GM12878 (cell line): ENCODE measurements at regions of chr7 and their contacts with region 1.

Region 1: GRCh38 chr7:38215735-38216670 is 38.0 kb downstream of the STARD3NL start:
- DNase-seq: peak; percentile 36
- ATAC-seq: peak; percentile 99
- H3K4me3 ChIP-seq: no peak overlapping the region
- H3K27ac ChIP-seq: peak overlapping the region; percentile 14; the same call in 1 of the 2 replicates
- H3K4me1 ChIP-seq: no peaks in the 10 kb centered on the region
- H3K27me3 ChIP-seq: no peaks in the 10 kb centered on the region
- CTCF ChIP-seq: peak; percentile 94 to 99 (median 98)
- EP300 ChIP-seq: no peak
- POLR2A ChIP-seq: no peak
- RAD21 ChIP-seq: peak; percentile 84

Region 2: GRCh38 chr7:37901236-37901827 is 314.7 kb before region 1 on chr7:
- CTCF ChIA-PET with region 1: interaction called, 38 read pairs
- POLR2A ChIA-PET with region 1: no interaction called
- RAD21 ChIA-PET with region 1: interaction called, 10 read pairs
- SMC1A ChIA-PET with region 1: interaction called, 31 read pairs
- in situ Hi-C with region 1: loop called (anchors 5 kb)
- intact Hi-C with region 1: loop called (anchors 5 kb)
- DNase-seq: no peak
- ATAC-seq: peak; percentile 78
- H3K4me3 ChIP-seq: no peak overlapping the region
- H3K27ac ChIP-seq: no peak overlapping the region
- H3K4me1 ChIP-seq: no peaks in the 10 kb centered on the region
- H3K27me3 ChIP-seq: peaks cover 0 to 2% of the 10 kb centered on the region in 2 experiments; a peak in 1 of 4 replicates
- CTCF ChIP-seq: peak; percentile 47 to 59 (median 50); a peak in 5 of 6 replicates
- EP300 ChIP-seq: no peak
- POLR2A ChIP-seq: no peak
- RAD21 ChIP-seq: peak; percentile 64

Region 3: GRCh38 chr7:38169847-38170246 is 46.2 kb before region 1 on chr7:
- CTCF ChIA-PET with region 1: interaction called, 14 read pairs
- POLR2A ChIA-PET with region 1: interaction called, 3 read pairs
- RAD21 ChIA-PET with region 1: interaction called, 12 read pairs
- SMC1A ChIA-PET with region 1: interaction called, 29 read pairs
- in situ Hi-C with region 1: no loop called
- intact Hi-C with region 1: loop called (anchors 5 kb)
- DNase-seq: peak; percentile 85
- ATAC-seq: peak; percentile 82
- H3K4me3 ChIP-seq: 0 out of 2 replicates have a peak overlapping the region, but pooled peaks have one; percentile 6
- H3K27ac ChIP-seq: peak overlapping the region; percentile 57
- H3K4me1 ChIP-seq: peaks cover 34% of the 10 kb centered on the region
- H3K27me3 ChIP-seq: no peaks in the 10 kb centered on the region
- CTCF ChIP-seq: no peak
- EP300 ChIP-seq: peak; percentile 38 to 83; a peak in 3 of 4 replicates
- POLR2A ChIP-seq: no peak
- RAD21 ChIP-seq: no peak

Region 4: DNA sequence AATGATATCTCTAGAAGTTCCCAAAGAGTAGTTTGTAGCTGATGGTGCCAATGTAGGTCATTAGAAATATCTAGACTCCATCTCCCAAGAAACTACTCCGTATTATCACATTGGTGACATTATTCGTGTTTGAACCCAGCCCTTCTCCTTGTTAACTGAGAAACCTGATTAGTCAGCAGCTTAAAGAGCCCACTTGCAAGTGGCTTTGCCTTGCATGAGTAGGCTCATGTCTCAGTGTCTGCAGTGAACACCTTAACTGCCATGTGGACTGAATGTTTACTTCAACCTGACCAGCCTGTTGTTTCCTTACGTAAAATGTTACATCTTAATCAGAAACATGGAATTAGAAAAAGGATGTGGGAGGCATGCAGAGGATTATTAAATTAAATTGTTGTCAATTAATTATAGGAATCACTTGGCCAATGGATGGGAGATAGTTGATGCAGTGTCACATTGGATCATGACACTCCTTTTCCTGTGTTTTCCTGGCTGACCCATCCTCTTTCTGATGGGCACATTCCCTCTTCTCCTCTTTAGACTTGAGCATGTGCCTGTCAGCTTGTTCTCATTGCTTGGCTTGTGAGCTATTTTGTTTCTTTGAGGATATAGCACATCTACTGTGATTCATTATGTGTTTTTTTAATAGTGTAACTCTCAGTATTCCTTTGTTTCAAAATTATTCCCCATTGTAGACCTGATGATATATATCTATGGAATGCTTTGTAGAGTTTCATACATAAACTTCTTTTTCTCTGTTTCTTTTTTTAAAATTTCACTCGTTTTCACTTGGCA is 20.0 kb before region 1 on chr7:
- CTCF ChIA-PET with region 1: interaction called, 114 read pairs
- POLR2A ChIA-PET with region 1: interaction called, 3 read pairs
- RAD21 ChIA-PET with region 1: interaction called, 12 read pairs
- SMC1A ChIA-PET with region 1: interaction called, 32 read pairs
- in situ Hi-C with region 1: no loop called
- intact Hi-C with region 1: no loop called
- DNase-seq: no peak
- ATAC-seq: peak; percentile 40; the same call in 1 of the 3 replicates
- H3K4me3 ChIP-seq: no peak overlapping the region
- H3K27ac ChIP-seq: no peak overlapping the region
- H3K4me1 ChIP-seq: no peaks in the 10 kb centered on the region
- H3K27me3 ChIP-seq: no peaks in the 10 kb centered on the region
- CTCF ChIP-seq: no peak
- EP300 ChIP-seq: no peak
- POLR2A ChIP-seq: no peak
- RAD21 ChIP-seq: no peak

Region 5: GRCh38 chr7:38318803-38319416 is 102.9 kb after region 1 on chr7:
- CTCF ChIA-PET with region 1: interaction called, 430 read pairs
- POLR2A ChIA-PET with region 1: interaction called, 3 read pairs
- RAD21 ChIA-PET with region 1: interaction called, 229 read pairs
- SMC1A ChIA-PET with region 1: interaction called, 289 read pairs
- in situ Hi-C with region 1: no loop called
- intact Hi-C with region 1: loop called (anchors 2 kb)
- DNase-seq: no peak
- ATAC-seq: peak; percentile 96
- H3K4me3 ChIP-seq: no peak overlapping the region
- H3K27ac ChIP-seq: no peak overlapping the region
- H3K4me1 ChIP-seq: no peaks in the 10 kb centered on the region
- H3K27me3 ChIP-seq: no peaks in the 10 kb centered on the region
- CTCF ChIP-seq: peak; percentile 74 to 88 (median 82)
- EP300 ChIP-seq: no peak
- POLR2A ChIP-seq: no peak
- RAD21 ChIP-seq: peak; percentile 93

Region 6: GRCh38 chr7:38369816-38370493 is 154.0 kb after region 1 on chr7:
- CTCF ChIA-PET with region 1: interaction called, 85 read pairs
- POLR2A ChIA-PET with region 1: no interaction called
- RAD21 ChIA-PET with region 1: interaction called, 14 read pairs
- SMC1A ChIA-PET with region 1: interaction called, 18 read pairs
- in situ Hi-C with region 1: no loop called
- intact Hi-C with region 1: no loop called
- DNase-seq: no peak
- ATAC-seq: peak; percentile 87
- H3K4me3 ChIP-seq: no peak overlapping the region
- H3K27ac ChIP-seq: peak overlapping the region; percentile 22; the same call in 1 of the 2 replicates
- H3K4me1 ChIP-seq: peaks cover 31% of the 10 kb centered on the region
- H3K27me3 ChIP-seq: no peaks in the 10 kb centered on the region
- CTCF ChIP-seq: peak; percentile 81 to 99 (median 96)
- EP300 ChIP-seq: no peak
- POLR2A ChIP-seq: no peak
- RAD21 ChIP-seq: no peak